ENCODE measurements at regions of chr14 and their contacts with region 1.

Region 1: DNA sequence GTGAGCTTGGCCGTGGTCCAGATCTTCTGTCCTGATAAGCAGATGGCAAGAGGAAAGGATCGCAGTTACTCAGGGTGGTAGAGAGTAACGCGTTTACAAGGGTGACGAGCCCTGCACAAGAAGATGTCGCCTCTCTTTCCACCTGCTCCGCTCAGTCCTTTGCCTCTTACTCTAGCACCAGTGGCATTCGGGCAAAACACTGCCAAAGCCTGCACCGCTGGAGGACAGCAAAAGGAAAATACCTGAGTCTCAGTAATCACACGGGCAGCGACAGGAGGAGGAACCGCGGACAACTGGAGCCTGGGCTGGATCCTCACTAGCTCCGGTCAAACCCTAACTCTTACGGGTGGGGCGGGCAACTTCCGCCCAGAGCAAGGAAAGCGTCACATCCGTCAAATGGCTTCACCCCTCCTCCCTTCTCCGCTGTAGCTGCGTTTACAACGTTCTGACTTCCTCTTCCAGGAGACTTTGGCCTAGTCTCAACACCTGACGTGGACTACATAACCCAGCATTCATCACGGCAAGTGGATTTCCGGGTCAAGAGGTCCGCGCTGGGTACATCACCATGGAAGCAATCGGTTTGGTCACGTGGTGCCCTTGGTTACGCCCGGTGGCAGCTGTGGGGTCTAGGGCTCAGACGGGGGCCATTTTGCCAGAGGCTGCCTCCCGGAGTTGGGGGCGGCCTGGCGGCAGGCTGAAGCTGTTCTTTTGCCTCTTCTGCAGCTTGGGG is at the starts of genes KLHL28 and TOGARAM1:
- DNase-seq: peak; percentile 99
- H3K4me3 ChIP-seq: peak within 1 kb of the TSS; percentile 59 to 86 (median 72)
- H3K27ac ChIP-seq: peak within 1 kb of the TSS; percentile 91 to 94 (median 92)
- H3K4me1 ChIP-seq: peaks cover 0 to 67% (median 56%) of the 10 kb centered on the region in 4 donors
- H3K27me3 ChIP-seq: no peaks in the 10 kb centered on the region
- CTCF ChIP-seq: no peak
- EP300 ChIP-seq: peak in 1 of 4 donors; percentile 78
- POLR2A ChIP-seq: peak; percentile 84 to 90
- total RNA-seq, gene KLHL28: 9.0 to 16.5 (median 11.3) TPM
- total RNA-seq, gene TOGARAM1: 14.3 to 27.1 (median 19.8) TPM

Region 2: DNA sequence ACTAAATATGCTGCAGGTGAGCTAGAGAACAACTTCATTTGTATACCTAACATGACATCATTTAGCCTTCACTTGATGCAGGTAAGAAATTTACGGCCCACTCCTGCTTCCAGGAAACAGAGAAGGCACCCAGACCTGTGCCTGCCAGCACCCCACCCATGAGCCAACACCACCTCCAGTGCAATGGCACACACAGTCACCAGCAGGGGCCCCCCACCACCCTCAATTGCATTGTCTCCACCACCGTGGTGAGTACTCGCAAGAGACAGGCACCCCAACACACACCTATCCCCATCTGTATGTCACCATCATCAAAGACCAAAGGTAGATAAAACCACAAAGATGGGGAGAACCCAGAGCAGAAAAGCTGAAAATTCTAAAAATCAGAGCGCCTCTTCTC is 107.7 kb before region 1 on chr14:
- intact Hi-C with region 1: no loop called
- DNase-seq: no peak
- H3K4me3 ChIP-seq: no peak overlapping the region
- H3K27ac ChIP-seq: no peak overlapping the region
- H3K4me1 ChIP-seq: no peaks in the 10 kb centered on the region
- H3K27me3 ChIP-seq: no peaks in the 10 kb centered on the region
- CTCF ChIP-seq: no peak
- EP300 ChIP-seq: no peak
- POLR2A ChIP-seq: no peak

Region 3: DNA sequence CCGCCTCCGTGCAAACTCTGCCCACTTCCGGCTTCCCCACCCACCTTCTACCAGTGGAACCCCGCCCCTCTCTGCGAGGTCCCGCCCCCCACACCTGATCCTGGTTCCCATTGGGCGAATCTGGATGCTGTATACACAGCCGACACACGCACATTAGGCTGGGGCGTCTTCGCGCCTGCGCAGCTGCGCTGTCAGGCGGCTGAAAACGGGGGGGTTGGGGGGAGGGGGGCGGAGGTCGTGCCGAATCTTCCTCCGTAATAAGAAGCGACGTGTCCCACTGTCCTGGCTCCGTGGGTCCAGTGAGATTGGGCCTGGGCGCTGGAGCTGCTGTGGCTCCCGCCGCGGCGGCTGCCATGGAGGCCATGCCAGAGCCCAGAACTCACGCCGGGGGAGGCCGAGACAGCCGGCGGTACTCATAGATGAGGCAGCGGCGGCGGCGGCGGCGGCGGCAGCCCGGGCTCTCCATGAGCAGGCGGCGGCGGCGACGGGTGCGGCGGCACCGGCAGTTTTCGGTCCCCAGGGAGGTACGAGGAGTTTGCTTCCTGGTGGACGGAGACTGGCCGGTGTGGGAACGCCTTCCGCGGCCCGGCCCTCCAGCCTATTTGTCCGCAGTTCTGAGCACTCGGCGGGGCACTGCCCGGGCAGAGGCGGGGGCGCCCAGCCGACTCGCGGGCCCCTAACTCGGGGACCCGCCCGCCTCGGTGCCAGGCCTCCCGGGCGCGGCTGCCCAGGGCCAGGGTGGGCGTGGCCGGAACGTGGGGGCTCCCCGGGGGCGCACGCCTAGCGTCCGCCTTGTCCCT is 64.5 kb before region 1 on chr14:
- intact Hi-C with region 1: loop called (anchors 2 kb)
- DNase-seq: peak; percentile 99
- H3K4me3 ChIP-seq: peak overlapping the region; percentile 82 to 95 (median 87)
- H3K27ac ChIP-seq: peak overlapping the region; percentile 99 to 100 (median 99)
- H3K4me1 ChIP-seq: peaks cover 0 to 53% (median 34%) of the 10 kb centered on the region in 4 donors
- H3K27me3 ChIP-seq: no peaks in the 10 kb centered on the region
- CTCF ChIP-seq: no peak
- EP300 ChIP-seq: no peak
- POLR2A ChIP-seq: peak; percentile 66 to 75